PC-3 (cell line): ENCODE measurements at regions of chr14 and their contacts with region 1.

Region 1: DNA sequence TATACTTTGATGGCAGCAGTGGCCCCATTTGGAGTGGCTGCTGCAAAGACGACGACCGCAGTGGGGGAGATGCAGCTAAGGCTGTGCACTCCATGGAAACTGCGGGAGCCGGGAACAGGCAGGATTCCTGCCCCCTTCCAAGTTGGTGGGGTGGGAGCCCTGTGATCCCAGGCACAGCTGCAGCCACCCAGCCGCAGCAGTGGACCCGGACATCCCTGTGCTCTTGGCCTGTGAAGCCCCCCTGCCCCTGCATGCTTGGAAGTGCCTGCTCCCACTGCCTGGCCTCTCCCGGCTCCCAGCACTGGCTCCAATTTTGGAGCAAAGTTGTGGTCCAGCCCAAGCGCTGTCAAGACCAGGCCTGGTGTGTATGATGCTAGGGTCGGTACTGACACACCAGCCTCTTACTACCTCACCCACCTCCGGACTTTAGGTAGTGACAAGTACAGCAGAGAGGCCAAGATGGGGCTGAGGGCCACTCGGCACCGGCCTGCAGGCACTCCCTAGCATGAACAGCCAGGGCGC is 502.8 kb upstream of the RPL10L start:
- DNase-seq: no peak
- ATAC-seq: no peak
- H3K4me3 ChIP-seq: no peak overlapping the region
- H3K27ac ChIP-seq: no peak overlapping the region
- H3K4me1 ChIP-seq: no peaks in the 10 kb centered on the region
- H3K27me3 ChIP-seq: peaks cover 7% of the 10 kb centered on the region
- CTCF ChIP-seq: no peak

Region 2: GRCh38 chr14:47085678-47086077 is 68.7 kb before region 1 on chr14:
- CTCF ChIA-PET with region 1: interaction called, 12 read pairs
- POLR2A ChIA-PET with region 1: no interaction called
- intact Hi-C with region 1: no loop called
- DNase-seq: no peak
- ATAC-seq: no peak
- H3K4me3 ChIP-seq: no peak overlapping the region
- H3K27ac ChIP-seq: no peak overlapping the region
- H3K4me1 ChIP-seq: no peaks in the 10 kb centered on the region
- H3K27me3 ChIP-seq: 0 out of 2 replicates have a peak, but pooled peaks cover 2% of the 10 kb centered on the region
- CTCF ChIP-seq: no peak